Heart right ventricle (tissue), 16 donors: ENCODE measurements at regions of chr13 and their contacts with region 1.

Region 1: GRCh38 chr13:48265217-48265815 is 32.3 kb downstream of the ITM2B start:
- DNase-seq: no peak
- ATAC-seq: peak in 2 of 8 donors; percentile 16 to 32
- H3K4me3 ChIP-seq: no peak overlapping the region
- H3K27ac ChIP-seq: no peak overlapping the region
- H3K4me1 ChIP-seq: peaks cover 0 to 36% (median 9%) of the 10 kb centered on the region in 9 donors
- H3K27me3 ChIP-seq: no peaks in the 10 kb centered on the region
- CTCF ChIP-seq: no peak

Region 2: GRCh38 chr13:48194379-48194754 is 70.9 kb before region 1 on chr13:
- intact Hi-C with region 1: loop called in 1 of 10 experiments (anchors 2 kb)
- DNase-seq: no peak
- ATAC-seq: peak in 2 of 8 donors; percentile 39 to 48
- H3K4me3 ChIP-seq: no peak overlapping the region
- H3K27ac ChIP-seq: peak overlapping the region in 1 of 10 donors; percentile 60
- H3K4me1 ChIP-seq: peaks cover 0 to 25% (median 0%) of the 10 kb centered on the region in 9 donors
- H3K27me3 ChIP-seq: no peaks in the 10 kb centered on the region
- CTCF ChIP-seq: no peak

Region 3: GRCh38 chr13:48679911-48680680 is 414.8 kb after region 1 on chr13:
- intact Hi-C with region 1: no loop called
- DNase-seq: no peak
- ATAC-seq: peak in 3 of 8 donors; percentile 36 to 70 (median 50)
- H3K4me3 ChIP-seq: peak overlapping the region in 1 of 10 donors; percentile 5
- H3K27ac ChIP-seq: peak overlapping the region in 6 of 10 donors; percentile 14 to 50 (median 26)
- H3K4me1 ChIP-seq: peaks cover 0 to 42% (median 0%) of the 10 kb centered on the region in 9 donors
- H3K27me3 ChIP-seq: no peaks in the 10 kb centered on the region
- CTCF ChIP-seq: no peak